Caco-2 (cell line): ENCODE measurements at regions of chr11 and their contacts with region 1.

Region 1: GRCh38 chr11:128552783-128553661 is 34.3 kb downstream of the ETS1 start:
- DNase-seq: no peak
- H3K4me3 ChIP-seq: no peak overlapping the region
- H3K4me3 Mint-ChIP-seq: no peak overlapping the region
- H3K27ac Mint-ChIP-seq: no peak overlapping the region
- H3K4me1 ChIP-seq: peaks cover 3% of the 10 kb centered on the region; the same call in 1 of the 2 replicates
- H3K4me1 Mint-ChIP-seq: peaks cover 7% of the 10 kb centered on the region
- H3K27me3 ChIP-seq: no peaks in the 10 kb centered on the region; the same call in 1 of the 2 replicates
- H3K27me3 Mint-ChIP-seq: peaks cover 7% of the 10 kb centered on the region
- CTCF ChIP-seq: no peak

Region 2: GRCh38 chr11:128039140-128040021 is 513.6 kb before region 1 on chr11:
- CTCF ChIA-PET with region 1: no interaction called
- POLR2A ChIA-PET with region 1: no interaction called
- intact Hi-C with region 1: loop called (anchors 5 kb)
- DNase-seq: no peak
- H3K4me3 ChIP-seq: no peak overlapping the region
- H3K4me3 Mint-ChIP-seq: no peak overlapping the region
- H3K27ac Mint-ChIP-seq: no peak overlapping the region
- H3K4me1 ChIP-seq: no peaks in the 10 kb centered on the region
- H3K4me1 Mint-ChIP-seq: no peaks in the 10 kb centered on the region
- H3K27me3 ChIP-seq: no peaks in the 10 kb centered on the region
- H3K27me3 Mint-ChIP-seq: peaks cover 21% of the 10 kb centered on the region
- CTCF ChIP-seq: no peak

Region 3: DNA sequence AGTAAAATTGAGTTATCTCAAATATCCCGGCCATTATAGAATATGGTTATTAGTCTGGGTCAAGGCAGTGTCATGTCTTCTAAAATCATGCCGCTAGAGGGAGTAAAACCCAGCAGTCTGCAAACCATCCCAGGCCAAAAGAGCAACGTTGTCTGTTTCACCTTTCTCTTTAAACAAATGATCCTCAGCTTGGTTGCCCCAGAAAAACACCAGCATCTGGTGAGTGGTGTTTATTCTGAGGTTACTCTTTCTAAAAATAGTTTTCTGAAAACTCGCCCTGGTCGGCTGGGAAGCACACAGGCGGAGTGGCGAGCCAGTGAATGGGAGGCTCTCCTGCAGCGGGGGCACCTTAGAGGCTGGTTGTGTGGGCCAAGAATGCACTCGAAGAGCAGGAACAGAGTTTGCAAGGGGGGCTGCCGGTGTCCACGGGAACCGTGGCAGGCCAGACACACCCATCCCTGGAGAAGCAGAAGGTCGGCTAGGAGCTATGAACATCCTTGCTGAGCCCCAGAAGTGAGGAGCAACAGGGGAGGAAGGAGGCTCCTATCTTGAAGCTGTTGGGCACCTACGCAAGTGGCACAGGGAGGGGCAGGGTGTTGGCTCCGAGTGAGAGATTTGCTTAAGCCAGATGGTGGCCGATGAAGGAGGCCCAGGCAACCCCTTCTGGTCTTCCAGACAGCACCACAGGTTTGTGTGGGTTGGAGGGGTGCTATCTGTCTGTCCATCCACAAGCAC is 262.7 kb before region 1 on chr11:
- CTCF ChIA-PET with region 1: no interaction called
- POLR2A ChIA-PET with region 1: no interaction called
- intact Hi-C with region 1: loop called (anchors 1 kb)
- DNase-seq: peak in 1 of 2 experiments; percentile 78
- H3K4me3 ChIP-seq: no peak overlapping the region
- H3K4me3 Mint-ChIP-seq: no peak overlapping the region
- H3K27ac Mint-ChIP-seq: no peak overlapping the region
- H3K4me1 ChIP-seq: no peaks in the 10 kb centered on the region
- H3K4me1 Mint-ChIP-seq: no peaks in the 10 kb centered on the region
- H3K27me3 ChIP-seq: no peaks in the 10 kb centered on the region; the same call in 1 of the 2 replicates
- H3K27me3 Mint-ChIP-seq: peaks cover 14% of the 10 kb centered on the region
- CTCF ChIP-seq: peak; percentile 88 to 95